HepG2 (cell line): ENCODE measurements at regions of chr4 and their contacts with region 1.

Region 1: DNA sequence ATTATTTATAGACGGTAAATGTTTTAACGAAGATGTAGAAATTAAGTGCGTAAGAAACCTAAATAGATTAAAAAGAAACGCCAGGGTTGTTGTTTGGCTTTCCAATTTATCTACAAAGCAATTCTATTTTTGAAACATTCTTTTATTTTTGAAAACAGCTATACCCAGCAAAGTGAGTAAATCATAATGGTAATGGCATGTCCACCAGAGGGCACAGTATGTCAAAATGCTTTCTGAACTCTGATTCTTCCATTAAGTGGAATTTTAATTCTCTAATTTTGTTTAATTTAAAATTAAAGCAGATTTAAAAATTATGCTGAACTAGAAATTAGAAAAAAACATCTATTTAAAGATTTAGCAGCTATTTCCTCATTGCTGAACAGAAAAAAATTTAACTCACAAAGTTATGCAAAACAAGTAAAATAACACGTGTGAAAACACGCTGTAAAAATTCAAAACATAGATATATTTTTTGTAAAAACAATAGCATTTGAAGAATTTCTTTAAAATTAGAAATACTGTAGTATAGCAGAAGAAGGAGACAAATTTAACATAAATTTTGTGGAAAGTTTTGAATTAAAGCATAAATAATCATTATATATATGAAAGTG is 26.5 kb downstream of the RASSF6 start:
- DNase-seq: peak; percentile 39
- ATAC-seq: no peak
- H3K4me3 ChIP-seq: no peak overlapping the region
- H3K27ac ChIP-seq: no peak overlapping the region
- H3K4me1 ChIP-seq: peaks cover 41% of the 10 kb centered on the region
- H3K27me3 ChIP-seq: no peaks in the 10 kb centered on the region
- CTCF ChIP-seq: peak; percentile 58
- EP300 ChIP-seq: no peak
- POLR2A ChIP-seq: no peak
- RAD21 ChIP-seq: peak; percentile 45; the same call in 1 of the 2 replicates

Region 2: GRCh38 chr4:73615613-73616012 is 21.9 kb after region 1 on chr4:
- CTCF ChIA-PET with region 1: no interaction called
- POLR2A ChIA-PET with region 1: interaction called, 3 read pairs
- in situ Hi-C with region 1: no loop called
- intact Hi-C with region 1: loop called (anchors 2 kb)
- DNase-seq: peak; percentile 41
- ATAC-seq: peak; percentile 89
- H3K4me3 ChIP-seq: no peak overlapping the region
- H3K27ac ChIP-seq: no peak overlapping the region
- H3K4me1 ChIP-seq: peaks cover 24% of the 10 kb centered on the region
- H3K27me3 ChIP-seq: no peaks in the 10 kb centered on the region; a peak in 1 of 5 replicates
- CTCF ChIP-seq: 0 out of 2 replicates have a peak, but pooled peaks have one; percentile 16
- EP300 ChIP-seq: peak in 1 of 2 experiments; percentile 18; a peak in 1 of 4 replicates
- POLR2A ChIP-seq: no peak
- RAD21 ChIP-seq: no peak